HepG2 (cell line): ENCODE measurements at regions of chr18 and their contacts with region 1.

Region 1: DNA sequence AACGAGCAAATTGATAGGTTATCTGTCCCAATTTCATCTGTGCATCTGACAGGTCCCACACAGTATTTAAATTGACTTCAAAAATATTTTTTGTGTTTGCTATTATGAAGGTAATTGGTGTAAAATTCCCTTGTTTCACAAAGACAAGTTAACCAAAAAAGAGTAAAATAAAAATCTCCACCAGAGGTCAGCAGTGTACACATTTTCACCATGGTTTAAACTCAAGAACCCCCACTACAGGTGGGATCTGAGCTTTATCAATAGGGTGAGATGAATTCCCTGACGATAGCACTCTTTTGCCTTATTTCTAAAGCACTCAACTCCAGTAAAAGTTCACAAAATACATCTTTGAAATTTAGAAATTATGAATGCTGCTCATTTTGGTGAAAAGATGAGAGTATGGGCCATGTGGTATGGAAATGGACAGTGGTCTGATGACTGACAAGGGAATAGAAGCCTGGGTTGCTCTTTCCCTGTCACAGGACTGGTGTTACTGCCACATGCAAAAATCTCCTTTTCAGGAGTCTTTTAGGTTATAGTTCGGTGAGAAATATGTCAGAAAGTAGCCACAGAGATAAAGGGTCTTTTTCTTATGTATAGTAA is 68.0 kb downstream of the SERPINB8 start:
- DNase-seq: peak; percentile 50
- ATAC-seq: peak; percentile 70
- H3K4me3 ChIP-seq: no peak overlapping the region
- H3K27ac ChIP-seq: no peak overlapping the region
- H3K4me1 ChIP-seq: no peaks in the 10 kb centered on the region
- H3K27me3 ChIP-seq: no peaks in the 10 kb centered on the region
- CTCF ChIP-seq: peak; percentile 53
- EP300 ChIP-seq: no peak
- POLR2A ChIP-seq: no peak
- RAD21 ChIP-seq: no peak

Region 2: GRCh38 chr18:64100116-64100922 is 62.4 kb after region 1 on chr18:
- CTCF ChIA-PET with region 1: no interaction called
- POLR2A ChIA-PET with region 1: no interaction called
- in situ Hi-C with region 1: no loop called
- intact Hi-C with region 1: no loop called
- DNase-seq: no peak
- ATAC-seq: no peak
- H3K4me3 ChIP-seq: no peak overlapping the region
- H3K27ac ChIP-seq: no peak overlapping the region
- H3K4me1 ChIP-seq: no peaks in the 10 kb centered on the region
- H3K27me3 ChIP-seq: no peaks in the 10 kb centered on the region
- CTCF ChIP-seq: no peak
- EP300 ChIP-seq: no peak
- POLR2A ChIP-seq: no peak
- RAD21 ChIP-seq: no peak

Region 3: GRCh38 chr18:65206551-65207260 is 1168.8 kb after region 1 on chr18:
- CTCF ChIA-PET with region 1: no interaction called
- POLR2A ChIA-PET with region 1: no interaction called
- in situ Hi-C with region 1: no loop called
- intact Hi-C with region 1: loop called (anchors 5 kb)
- DNase-seq: peak; percentile 4
- ATAC-seq: peak; percentile 99
- H3K4me3 ChIP-seq: peak overlapping the region in 1 of 3 experiments; percentile 15; a peak in 1 of 6 replicates
- H3K27ac ChIP-seq: no peak overlapping the region
- H3K4me1 ChIP-seq: no peaks in the 10 kb centered on the region
- H3K27me3 ChIP-seq: no peaks in the 10 kb centered on the region
- CTCF ChIP-seq: peak; percentile 70
- EP300 ChIP-seq: no peak
- POLR2A ChIP-seq: no peak
- RAD21 ChIP-seq: no peak

Region 4: GRCh38 chr18:65279668-65280305 is 1241.9 kb after region 1 on chr18:
- CTCF ChIA-PET with region 1: no interaction called
- POLR2A ChIA-PET with region 1: no interaction called
- in situ Hi-C with region 1: no loop called
- intact Hi-C with region 1: no loop called
- DNase-seq: no peak
- ATAC-seq: peak; percentile 62
- H3K4me3 ChIP-seq: peak overlapping the region in 1 of 3 experiments; percentile 51; a peak in 1 of 6 replicates
- H3K27ac ChIP-seq: no peak overlapping the region
- H3K4me1 ChIP-seq: no peaks in the 10 kb centered on the region
- H3K27me3 ChIP-seq: no peaks in the 10 kb centered on the region
- CTCF ChIP-seq: no peak
- EP300 ChIP-seq: no peak
- POLR2A ChIP-seq: no peak
- RAD21 ChIP-seq: no peak